Sciatic nerve (tissue), 2 donors: ENCODE measurements at regions of chr12 and their contacts with region 1.

Region 1: GRCh38 chr12:54993161-54993835 is 8.7 kb upstream of the TESPA1 start:
- DNase-seq: no peak
- ATAC-seq: peak; percentile 76

Region 2: DNA sequence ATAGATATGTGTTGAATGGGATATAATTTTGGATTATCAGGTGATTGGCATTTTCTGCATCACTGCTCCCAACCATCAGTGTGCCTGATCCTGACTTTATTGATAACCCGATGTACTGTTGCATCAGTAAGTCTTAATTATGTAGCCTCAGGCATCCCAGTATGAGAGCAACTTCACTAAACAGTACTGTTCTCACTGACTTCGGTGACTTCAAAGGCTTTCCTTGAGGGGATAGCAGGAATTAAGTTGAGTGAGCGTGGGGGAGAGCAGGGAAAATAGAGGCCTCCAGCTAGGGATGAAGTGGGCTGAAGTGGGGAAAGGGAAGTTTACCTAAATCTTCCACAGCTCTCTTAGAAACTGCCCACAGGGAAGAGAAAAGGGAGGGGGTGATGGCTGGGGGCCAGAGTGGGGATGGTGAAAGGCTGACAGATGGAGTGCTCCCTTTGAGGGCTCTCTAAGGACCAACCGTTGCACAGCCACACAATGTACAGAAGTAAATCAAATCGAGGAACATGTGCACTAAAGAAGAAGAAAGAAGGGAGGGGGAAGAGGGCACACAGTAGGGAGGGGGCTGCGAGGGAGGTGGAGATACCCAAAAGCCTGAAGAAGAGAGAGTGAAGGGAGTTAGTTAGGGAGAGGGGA is 15.8 kb after region 1 on chr12:
- intact Hi-C with region 1: no loop called
- DNase-seq: no peak
- ATAC-seq: no peak

Region 3: GRCh38 chr12:55068416-55069010 is 75.2 kb after region 1 on chr12:
- intact Hi-C with region 1: loop called (anchors 10 kb)
- DNase-seq: no peak
- ATAC-seq: peak; percentile 82